Testis (tissue), 5 donors: ENCODE measurements at regions of chr2 and their contacts with region 1.

Region 1: GRCh38 chr2:18749912-18750526 is 160.7 kb upstream of the NT5C1B start:
- DNase-seq: peak; percentile 84
- H3K4me3 ChIP-seq: no peak overlapping the region
- H3K27ac ChIP-seq: no peak overlapping the region
- H3K4me1 ChIP-seq: peaks cover 16% of the 10 kb centered on the region
- H3K27me3 ChIP-seq: no peaks in the 10 kb centered on the region
- CTCF ChIP-seq: peak; percentile 66 to 84 (median 81)
- POLR2A ChIP-seq: no peak

Region 2: DNA sequence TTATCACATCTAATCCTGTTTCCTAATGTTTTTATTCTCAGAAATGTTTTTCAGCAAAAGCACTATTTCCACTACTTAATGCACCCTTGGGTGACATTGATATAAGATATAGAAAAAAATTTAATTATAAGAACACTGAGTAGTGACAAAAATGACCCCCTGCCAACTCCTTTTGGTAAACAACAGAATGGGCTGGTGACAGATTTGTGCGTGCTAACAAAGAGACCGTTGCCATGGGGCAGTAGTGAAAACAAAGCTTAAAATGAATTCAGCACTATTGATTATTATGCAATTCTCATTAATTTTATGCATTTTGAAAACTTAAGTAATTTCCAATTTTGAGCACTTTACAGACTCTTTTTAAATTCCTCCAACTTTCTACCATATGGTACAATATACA is 222.7 kb before region 1 on chr2:
- intact Hi-C with region 1: loop called (anchors 5 kb)
- DNase-seq: no peak
- H3K4me3 ChIP-seq: no peak overlapping the region
- H3K27ac ChIP-seq: no peak overlapping the region
- H3K4me1 ChIP-seq: no peaks in the 10 kb centered on the region
- H3K27me3 ChIP-seq: no peaks in the 10 kb centered on the region
- CTCF ChIP-seq: no peak
- POLR2A ChIP-seq: no peak